MCF 10A (cell line): ENCODE measurements at regions of chr17 and their contacts with region 1.

Region 1: GRCh38 chr17:77834170-77835115 is 124.1 kb upstream of the TNRC6C start:
- DNase-seq: peak; percentile 88
- H3K4me3 Mint-ChIP-seq: peak overlapping the region; percentile 40
- H3K27ac Mint-ChIP-seq: no peak overlapping the region
- H3K4me1 Mint-ChIP-seq: peaks cover 22% of the 10 kb centered on the region
- H3K27me3 Mint-ChIP-seq: no peaks in the 10 kb centered on the region
- CTCF ChIP-seq: no peak

Region 2: DNA sequence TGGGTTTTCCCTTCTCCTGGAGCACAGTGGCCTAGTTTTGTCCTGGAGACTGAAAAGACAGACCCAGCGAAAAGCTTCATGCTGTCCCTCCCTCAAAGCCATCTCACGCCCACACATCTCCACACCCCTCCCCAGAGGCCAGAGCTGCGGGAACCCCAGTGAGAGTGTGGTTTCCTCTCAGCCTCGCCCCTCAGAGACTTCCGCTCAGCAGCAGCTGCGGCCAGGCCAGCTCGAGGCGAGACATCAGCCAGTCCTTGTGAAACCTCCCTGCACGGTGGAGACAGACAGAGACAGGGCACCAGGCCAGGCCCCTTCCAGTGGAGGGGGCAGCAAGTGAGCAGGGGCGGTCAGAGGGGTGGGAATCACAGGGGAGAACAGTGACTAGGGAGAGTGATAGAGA is 47.1 kb after region 1 on chr17:
- CTCF ChIA-PET with region 1: no interaction called
- POLR2A ChIA-PET with region 1: no interaction called
- intact Hi-C with region 1: loop called (anchors 10 kb)
- DNase-seq: peak; percentile 83
- H3K4me3 Mint-ChIP-seq: no peak overlapping the region
- H3K27ac Mint-ChIP-seq: no peak overlapping the region
- H3K4me1 Mint-ChIP-seq: peaks cover 26% of the 10 kb centered on the region
- H3K27me3 Mint-ChIP-seq: no peaks in the 10 kb centered on the region
- CTCF ChIP-seq: no peak